Panc1 (cell line): ENCODE measurements at regions of chr7 and their contacts with region 1.

Region 1: DNA sequence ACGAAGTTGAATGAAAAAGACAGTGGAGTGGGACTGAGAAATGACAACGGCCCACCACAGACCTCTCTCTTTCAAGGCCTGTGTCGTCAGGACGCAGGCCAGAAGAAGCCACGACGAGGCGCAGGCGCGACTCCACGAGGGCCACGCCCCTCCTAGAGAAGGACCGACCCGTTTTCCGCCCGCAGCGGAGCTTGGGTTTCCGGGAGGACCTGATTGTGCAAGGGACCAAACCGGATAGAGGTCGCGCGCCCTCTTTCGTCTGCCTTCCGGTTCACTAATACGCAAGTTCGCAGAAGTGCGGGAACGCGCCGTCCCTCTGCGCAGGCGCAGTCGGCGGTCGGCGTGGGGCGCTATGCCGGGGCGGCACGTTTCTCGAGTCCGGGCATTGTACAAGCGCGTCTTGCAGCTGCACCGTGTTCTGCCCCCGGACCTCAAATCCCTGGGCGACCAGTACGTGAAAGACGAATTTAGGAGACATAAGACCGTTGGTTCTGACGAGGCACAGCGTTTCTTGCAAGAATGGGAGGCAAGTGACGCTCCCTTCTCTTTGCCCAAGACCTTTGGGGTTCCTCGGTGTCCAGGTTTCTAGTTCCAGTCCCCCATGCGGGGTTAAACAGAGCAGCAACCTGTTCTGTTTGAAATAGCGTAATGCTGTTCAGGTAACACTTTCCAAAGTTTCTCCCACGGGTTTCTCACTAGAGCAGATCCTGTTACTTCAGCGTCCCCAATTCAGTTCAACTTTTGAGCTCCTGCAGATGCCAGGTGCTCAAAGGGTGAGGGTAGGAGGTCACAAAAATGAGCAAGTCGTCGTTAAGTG is at the start of gene SDHAF3:
- DNase-seq: peak; percentile 93
- ATAC-seq: peak; percentile 98
- H3K4me3 ChIP-seq: peak within 1 kb of the TSS; percentile 88 to 96
- H3K27ac ChIP-seq: peak within 1 kb of the TSS; percentile 98
- H3K4me1 ChIP-seq: peaks cover 10% of the 10 kb centered on the region
- H3K27me3 ChIP-seq: no peaks in the 10 kb centered on the region
- CTCF ChIP-seq: peak; percentile 28
- total RNA-seq, gene SDHAF3: 16.1 TPM

Region 2: GRCh38 chr7:95511716-95512260 is 1605.8 kb before region 1 on chr7:
- CTCF ChIA-PET with region 1: no interaction called
- POLR2A ChIA-PET with region 1: no interaction called
- in situ Hi-C with region 1: no loop called
- intact Hi-C with region 1: no loop called
- DNase-seq: no peak
- ATAC-seq: peak; percentile 90
- H3K4me3 ChIP-seq: no peak overlapping the region
- H3K27ac ChIP-seq: no peak overlapping the region
- H3K4me1 ChIP-seq: no peaks in the 10 kb centered on the region
- H3K27me3 ChIP-seq: no peaks in the 10 kb centered on the region
- CTCF ChIP-seq: peak; percentile 88

Region 3: GRCh38 chr7:95950698-95951097 is 1166.9 kb before region 1 on chr7:
- CTCF ChIA-PET with region 1: no interaction called
- POLR2A ChIA-PET with region 1: interaction called, 11 read pairs
- in situ Hi-C with region 1: no loop called
- intact Hi-C with region 1: no loop called
- DNase-seq: no peak
- ATAC-seq: no peak
- H3K4me3 ChIP-seq: no peak overlapping the region
- H3K27ac ChIP-seq: no peak overlapping the region
- H3K4me1 ChIP-seq: no peaks in the 10 kb centered on the region
- H3K27me3 ChIP-seq: 0 out of 2 replicates have a peak, but pooled peaks cover 4% of the 10 kb centered on the region
- CTCF ChIP-seq: no peak